PC-3 (cell line): ENCODE measurements at regions of chr3 and their contacts with region 1.

Region 1: DNA sequence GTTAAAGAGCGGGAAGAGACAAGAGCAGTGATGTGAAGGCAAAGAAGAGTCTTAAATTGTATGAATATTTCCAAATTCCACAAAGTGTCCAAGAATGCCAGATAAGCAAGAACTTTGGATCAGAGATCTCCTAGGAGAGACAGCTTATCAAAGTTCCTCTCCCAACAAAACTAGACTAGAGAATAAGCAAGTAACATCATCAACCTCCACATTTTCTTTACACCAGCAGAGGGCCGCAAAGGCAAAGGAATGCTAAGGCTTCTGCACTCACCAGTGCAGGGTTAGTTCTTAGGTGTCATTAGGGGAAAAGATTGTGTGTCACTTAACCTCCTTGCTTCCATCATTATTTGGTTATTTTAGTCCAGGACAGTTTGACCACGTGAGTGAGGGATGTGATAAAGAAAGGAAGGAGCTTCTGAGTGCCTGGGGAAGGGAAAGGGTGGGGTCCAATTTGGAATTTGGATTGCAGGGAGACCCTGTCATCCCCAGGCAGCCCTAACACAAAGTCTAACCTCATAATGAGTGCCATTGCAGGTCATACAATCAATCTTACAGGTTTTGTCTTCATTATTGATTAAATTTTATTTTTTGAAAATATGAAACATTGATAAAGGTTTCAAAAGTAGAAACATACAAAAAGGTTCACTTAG is 7.5 kb upstream of the CMTM6 start:
- DNase-seq: peak; percentile 86
- ATAC-seq: peak; percentile 99
- H3K4me3 ChIP-seq: no peak overlapping the region
- H3K27ac ChIP-seq: no peak overlapping the region
- H3K4me1 ChIP-seq: no peaks in the 10 kb centered on the region
- H3K27me3 ChIP-seq: no peaks in the 10 kb centered on the region
- CTCF ChIP-seq: peak; percentile 94

Region 2: GRCh38 chr3:32577581-32578556 is 67.7 kb after region 1 on chr3:
- CTCF ChIA-PET with region 1: no interaction called
- POLR2A ChIA-PET with region 1: no interaction called
- intact Hi-C with region 1: loop called (anchors 2 kb)
- DNase-seq: peak; percentile 19
- ATAC-seq: peak; percentile 83
- H3K4me3 ChIP-seq: 0 out of 2 replicates have a peak overlapping the region, but pooled peaks have one; percentile 1
- H3K27ac ChIP-seq: no peak overlapping the region
- H3K4me1 ChIP-seq: peaks cover 13% of the 10 kb centered on the region
- H3K27me3 ChIP-seq: no peaks in the 10 kb centered on the region
- CTCF ChIP-seq: no peak

Region 3: DNA sequence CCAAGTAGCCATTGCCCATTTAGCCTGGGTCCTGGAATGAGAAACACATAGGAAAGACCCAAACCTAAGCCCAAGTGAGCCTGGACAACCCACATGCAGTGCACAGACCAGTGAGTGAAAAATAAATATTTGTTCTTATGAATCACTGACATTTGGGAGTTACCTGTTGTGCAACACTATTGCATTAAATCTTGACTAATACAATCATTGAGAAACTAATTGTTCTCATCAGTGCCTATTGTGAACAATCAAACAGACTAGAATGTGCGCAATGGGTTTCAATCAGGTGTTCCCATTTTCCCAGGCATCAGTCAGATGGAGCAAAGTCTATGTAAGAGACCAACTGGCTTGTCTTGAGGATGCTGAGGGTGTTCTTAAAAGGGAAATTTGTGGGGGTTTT is 120.1 kb after region 1 on chr3:
- CTCF ChIA-PET with region 1: interaction called, 5 read pairs
- POLR2A ChIA-PET with region 1: no interaction called
- intact Hi-C with region 1: loop called (anchors 1 kb)
- DNase-seq: peak; percentile 82
- ATAC-seq: peak; percentile 91
- H3K4me3 ChIP-seq: no peak overlapping the region
- H3K27ac ChIP-seq: peak overlapping the region; percentile 31
- H3K4me1 ChIP-seq: peaks cover 16% of the 10 kb centered on the region
- H3K27me3 ChIP-seq: no peaks in the 10 kb centered on the region
- CTCF ChIP-seq: no peak

Region 4: GRCh38 chr3:32667122-32667521 is 156.9 kb after region 1 on chr3:
- CTCF ChIA-PET with region 1: interaction called, 5 read pairs
- POLR2A ChIA-PET with region 1: no interaction called
- intact Hi-C with region 1: loop called (anchors 1 kb)
- DNase-seq: peak; percentile 45
- ATAC-seq: peak; percentile 27
- H3K4me3 ChIP-seq: no peak overlapping the region
- H3K27ac ChIP-seq: no peak overlapping the region
- H3K4me1 ChIP-seq: peaks cover 6% of the 10 kb centered on the region; the same call in 1 of the 2 replicates
- H3K27me3 ChIP-seq: no peaks in the 10 kb centered on the region
- CTCF ChIP-seq: no peak

Region 5: GRCh38 chr3:32934150-32934742 is 424.0 kb after region 1 on chr3:
- CTCF ChIA-PET with region 1: no interaction called
- POLR2A ChIA-PET with region 1: no interaction called
- intact Hi-C with region 1: loop called (anchors 10 kb)
- DNase-seq: peak; percentile 63
- ATAC-seq: no peak
- H3K4me3 ChIP-seq: no peak overlapping the region
- H3K27ac ChIP-seq: no peak overlapping the region
- H3K4me1 ChIP-seq: peaks cover 4% of the 10 kb centered on the region; the same call in 1 of the 2 replicates
- H3K27me3 ChIP-seq: no peaks in the 10 kb centered on the region
- CTCF ChIP-seq: peak; percentile 88